ENCODE measurements at regions of chr3 and their contacts with region 1.

Region 1: DNA sequence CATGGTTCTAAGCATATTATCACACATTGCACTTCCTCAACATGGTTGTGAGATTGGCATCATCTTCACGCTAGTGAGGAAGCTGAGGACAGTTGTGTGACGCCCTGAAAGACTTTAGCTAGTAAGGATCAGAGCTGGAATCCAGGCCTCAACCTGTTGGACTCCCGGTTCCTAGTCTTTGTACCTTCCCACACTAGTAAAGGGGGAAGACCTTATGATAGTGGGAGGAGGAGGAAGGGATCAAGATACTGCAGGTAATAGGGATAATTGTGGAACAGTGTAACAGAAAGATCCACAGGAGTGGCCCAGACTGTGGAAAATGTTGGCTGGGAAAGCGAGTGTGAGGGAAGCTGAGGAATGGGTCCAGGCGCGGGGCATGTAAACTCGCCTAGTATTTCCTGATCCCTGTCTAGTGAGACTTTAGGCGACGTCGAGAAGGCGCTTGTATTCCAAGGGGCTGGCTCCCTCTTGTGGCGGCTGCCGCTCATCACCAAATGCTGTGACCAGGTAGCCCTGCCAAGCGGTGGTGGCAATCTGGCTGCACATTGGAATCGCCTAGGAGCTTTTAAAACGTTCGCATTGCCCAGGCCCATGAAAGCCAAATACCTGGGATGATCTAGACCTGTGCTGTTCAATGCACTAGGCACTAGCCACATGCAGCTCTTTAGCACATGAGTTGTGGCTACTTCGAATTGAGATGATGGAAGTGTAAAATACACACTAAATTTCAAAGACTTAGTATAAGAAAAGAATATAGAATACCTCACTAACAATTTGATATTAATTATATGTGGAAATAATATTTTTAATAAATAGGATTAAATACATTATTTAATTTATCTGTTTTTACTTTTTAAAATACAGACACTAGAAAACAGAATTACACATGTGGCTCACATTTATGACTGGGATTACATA is 38.8 kb upstream of the CLDN18 start:
- DNase-seq: peak; percentile 74
- H3K4me3 ChIP-seq: no peak overlapping the region
- H3K27ac ChIP-seq: no peak overlapping the region
- H3K4me1 ChIP-seq: peaks cover 0 to 3% (median 0%) of the 10 kb centered on the region in 4 donors
- H3K27me3 ChIP-seq: no peaks in the 10 kb centered on the region
- CTCF ChIP-seq: peak; percentile 52 to 77 (median 68)
- EP300 ChIP-seq: no peak
- POLR2A ChIP-seq: no peak

Region 2: GRCh38 chr3:137930976-137931375 is 40.2 kb before region 1 on chr3:
- in situ Hi-C with region 1: no loop called
- intact Hi-C with region 1: no loop called
- DNase-seq: no peak
- H3K4me3 ChIP-seq: no peak overlapping the region
- H3K27ac ChIP-seq: no peak overlapping the region
- H3K4me1 ChIP-seq: no peaks in the 10 kb centered on the region
- H3K27me3 ChIP-seq: no peaks in the 10 kb centered on the region
- CTCF ChIP-seq: no peak
- EP300 ChIP-seq: no peak
- POLR2A ChIP-seq: no peak

Region 3: DNA sequence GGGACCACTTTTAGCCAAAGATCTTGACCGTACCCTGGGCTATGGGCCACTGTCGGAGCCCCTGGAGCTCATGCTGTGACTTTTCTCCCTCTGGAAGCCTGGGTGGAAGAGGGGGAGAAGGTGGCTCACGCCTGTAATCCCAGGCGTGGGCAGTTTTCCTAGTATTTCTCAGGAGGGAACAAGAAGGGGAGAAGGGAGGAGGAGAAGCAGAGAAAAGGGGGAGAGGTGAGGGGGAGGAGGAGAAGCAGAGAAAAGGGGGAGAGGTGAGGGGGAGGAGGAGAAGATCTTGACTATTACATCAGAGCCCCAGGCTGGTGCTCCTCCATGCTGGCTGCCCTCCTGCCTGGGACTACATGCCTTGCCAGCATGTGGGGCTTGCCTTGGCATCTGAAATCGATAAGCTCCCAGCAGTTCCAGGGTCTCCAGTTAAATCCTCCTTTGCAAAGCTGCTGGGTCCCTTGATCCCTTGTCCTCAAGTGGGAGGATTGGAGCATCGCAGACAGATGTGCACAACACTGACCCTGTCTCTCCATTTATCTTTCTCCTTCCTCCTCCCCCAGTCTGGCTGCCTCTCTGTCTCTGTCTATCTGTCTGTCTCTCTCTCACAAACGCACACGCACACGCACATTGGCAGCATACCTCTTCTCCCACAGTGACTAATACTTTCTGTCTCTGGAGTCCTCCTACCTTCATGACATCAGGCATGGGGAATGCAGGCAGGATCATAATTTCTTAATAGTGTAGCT is 418.8 kb after region 1 on chr3:
- in situ Hi-C with region 1: no loop called
- intact Hi-C with region 1: no loop called
- DNase-seq: no peak
- H3K4me3 ChIP-seq: no peak overlapping the region
- H3K27ac ChIP-seq: peak overlapping the region in 1 of 4 donors; percentile 36
- H3K4me1 ChIP-seq: peaks cover 0 to 9% (median 0%) of the 10 kb centered on the region in 4 donors
- H3K27me3 ChIP-seq: no peaks in the 10 kb centered on the region
- CTCF ChIP-seq: no peak
- EP300 ChIP-seq: no peak
- POLR2A ChIP-seq: no peak

Region 4: DNA sequence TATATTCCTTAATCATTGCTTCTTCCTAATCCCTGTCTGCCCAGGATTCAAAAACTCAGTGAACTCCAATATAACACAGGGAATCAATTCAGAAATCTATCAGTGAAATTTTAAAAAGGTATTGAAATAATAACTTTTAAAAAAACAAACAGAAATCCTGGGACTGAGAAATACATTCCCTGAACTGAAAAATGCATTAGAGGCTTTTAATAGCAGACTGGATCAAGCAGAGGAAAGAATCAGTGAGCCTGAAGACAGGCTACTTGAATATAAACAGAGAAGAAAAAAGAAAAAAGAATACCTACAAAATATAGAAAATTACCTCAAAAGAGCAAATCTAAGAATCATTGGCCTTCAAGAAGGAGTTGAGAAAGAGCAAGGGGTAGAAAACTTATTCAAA is 568.2 kb after region 1 on chr3:
- in situ Hi-C with region 1: no loop called
- intact Hi-C with region 1: loop called (anchors 5 kb)
- DNase-seq: no peak
- H3K4me3 ChIP-seq: no peak overlapping the region
- H3K27ac ChIP-seq: no peak overlapping the region
- H3K4me1 ChIP-seq: no peaks in the 10 kb centered on the region
- H3K27me3 ChIP-seq: no peaks in the 10 kb centered on the region
- CTCF ChIP-seq: no peak
- EP300 ChIP-seq: no peak
- POLR2A ChIP-seq: no peak